Endothelial cell of umbilical vein (primary cell): ENCODE measurements at regions of chr9 and their contacts with region 1.

Region 1: GRCh38 chr9:94603259-94604160 is 9.9 kb upstream of the FBP2 start:
- DNase-seq: peak; percentile 53
- H3K4me3 ChIP-seq: no peak overlapping the region
- H3K27ac ChIP-seq: no peak overlapping the region
- H3K4me1 ChIP-seq: no peaks in the 10 kb centered on the region
- H3K27me3 ChIP-seq: peaks cover 3% of the 10 kb centered on the region in 2 experiments
- CTCF ChIP-seq: peak; percentile 67 to 79
- POLR2A ChIP-seq: no peak

Region 2: GRCh38 chr9:94464790-94465189 is 138.7 kb before region 1 on chr9:
- CTCF ChIA-PET with region 1: no interaction called
- POLR2A ChIA-PET with region 1: no interaction called
- dilution Hi-C with region 1: no loop called
- intact Hi-C with region 1: no loop called
- DNase-seq: no peak
- H3K4me3 ChIP-seq: no peak overlapping the region
- H3K27ac ChIP-seq: no peak overlapping the region
- H3K4me1 ChIP-seq: no peaks in the 10 kb centered on the region
- H3K27me3 ChIP-seq: no peaks in the 10 kb centered on the region
- CTCF ChIP-seq: no peak
- POLR2A ChIP-seq: no peak

Region 3: DNA sequence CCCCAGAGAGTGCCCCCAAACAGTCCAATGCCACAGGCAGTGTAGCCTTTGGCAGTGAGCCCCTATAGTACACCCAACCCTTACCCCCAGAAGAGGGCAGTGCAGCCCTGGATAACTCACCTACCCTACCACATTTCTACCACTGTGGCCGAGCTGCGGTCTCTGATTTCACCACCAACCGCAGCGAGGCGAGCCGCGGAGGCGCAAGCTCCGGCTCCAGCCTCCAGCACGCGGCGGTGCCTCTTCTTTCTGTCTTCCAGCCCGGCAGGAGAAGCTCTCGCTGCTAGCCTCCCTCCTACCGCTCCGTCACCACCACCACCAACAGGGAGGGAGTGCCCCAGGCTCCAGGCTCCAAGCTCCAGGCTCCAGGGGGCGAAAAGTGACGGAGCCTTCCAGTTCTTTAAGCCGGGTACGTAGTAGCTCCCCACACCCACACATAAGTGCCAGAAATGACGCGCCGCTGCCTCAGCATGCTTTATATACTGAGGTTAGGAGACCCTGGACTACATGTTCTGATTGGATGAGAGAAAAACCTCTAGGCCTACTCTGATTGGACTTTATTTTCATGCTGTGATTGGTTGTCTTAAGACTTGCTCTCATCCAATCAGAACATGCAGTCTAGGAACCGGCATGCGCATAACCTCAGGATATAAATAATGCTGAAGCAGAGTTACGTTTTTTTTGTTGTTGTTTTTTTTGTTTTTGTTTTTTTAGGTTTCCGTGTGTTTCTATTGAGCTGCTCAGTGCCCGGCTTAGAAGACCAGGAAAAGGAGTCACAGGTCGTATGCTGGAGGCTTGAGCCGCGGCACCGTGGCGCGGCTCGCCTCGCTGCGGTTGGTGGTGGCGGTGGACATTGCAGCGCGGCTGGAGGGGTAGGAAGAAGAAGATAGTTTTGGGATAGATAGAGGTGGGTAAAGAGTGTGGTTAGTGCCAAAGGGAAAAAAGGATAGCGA is 48.8 kb before region 1 on chr9 and contains the start of gene PCAT7:
- CTCF ChIA-PET with region 1: no interaction called
- POLR2A ChIA-PET with region 1: no interaction called
- dilution Hi-C with region 1: no loop called
- intact Hi-C with region 1: loop called (anchors 1 kb)
- DNase-seq: peak; percentile 12
- H3K4me3 ChIP-seq: no peak within 1 kb of the TSS
- H3K27ac ChIP-seq: no peak within 1 kb of the TSS
- H3K4me1 ChIP-seq: no peaks in the 10 kb centered on the region
- H3K27me3 ChIP-seq: peaks cover 0 to 2% of the 10 kb centered on the region in 2 experiments
- CTCF ChIP-seq: peak in 1 of 2 donors; percentile 29
- POLR2A ChIP-seq: no peak
- total RNA-seq, gene PCAT7: not detected in 2 replicates

Region 4: GRCh38 chr9:94586814-94587213 is 16.7 kb before region 1 on chr9:
- CTCF ChIA-PET with region 1: no interaction called
- POLR2A ChIA-PET with region 1: no interaction called
- dilution Hi-C with region 1: no loop called
- intact Hi-C with region 1: no loop called
- DNase-seq: no peak
- H3K4me3 ChIP-seq: no peak overlapping the region
- H3K27ac ChIP-seq: no peak overlapping the region
- H3K4me1 ChIP-seq: no peaks in the 10 kb centered on the region
- H3K27me3 ChIP-seq: no peaks in the 10 kb centered on the region
- CTCF ChIP-seq: no peak
- POLR2A ChIP-seq: no peak

Region 5: GRCh38 chr9:94922098-94922607 is 318.6 kb after region 1 on chr9:
- CTCF ChIA-PET with region 1: no interaction called
- POLR2A ChIA-PET with region 1: no interaction called
- dilution Hi-C with region 1: no loop called
- intact Hi-C with region 1: no loop called
- DNase-seq: peak; percentile 78
- H3K4me3 ChIP-seq: no peak overlapping the region
- H3K27ac ChIP-seq: peak overlapping the region; percentile 38
- H3K4me1 ChIP-seq: peaks cover 18% of the 10 kb centered on the region
- H3K27me3 ChIP-seq: no peaks in the 10 kb centered on the region
- CTCF ChIP-seq: no peak
- POLR2A ChIP-seq: no peak